ENCODE measurements at regions of chr6 and their contacts with region 1.

Region 1: DNA sequence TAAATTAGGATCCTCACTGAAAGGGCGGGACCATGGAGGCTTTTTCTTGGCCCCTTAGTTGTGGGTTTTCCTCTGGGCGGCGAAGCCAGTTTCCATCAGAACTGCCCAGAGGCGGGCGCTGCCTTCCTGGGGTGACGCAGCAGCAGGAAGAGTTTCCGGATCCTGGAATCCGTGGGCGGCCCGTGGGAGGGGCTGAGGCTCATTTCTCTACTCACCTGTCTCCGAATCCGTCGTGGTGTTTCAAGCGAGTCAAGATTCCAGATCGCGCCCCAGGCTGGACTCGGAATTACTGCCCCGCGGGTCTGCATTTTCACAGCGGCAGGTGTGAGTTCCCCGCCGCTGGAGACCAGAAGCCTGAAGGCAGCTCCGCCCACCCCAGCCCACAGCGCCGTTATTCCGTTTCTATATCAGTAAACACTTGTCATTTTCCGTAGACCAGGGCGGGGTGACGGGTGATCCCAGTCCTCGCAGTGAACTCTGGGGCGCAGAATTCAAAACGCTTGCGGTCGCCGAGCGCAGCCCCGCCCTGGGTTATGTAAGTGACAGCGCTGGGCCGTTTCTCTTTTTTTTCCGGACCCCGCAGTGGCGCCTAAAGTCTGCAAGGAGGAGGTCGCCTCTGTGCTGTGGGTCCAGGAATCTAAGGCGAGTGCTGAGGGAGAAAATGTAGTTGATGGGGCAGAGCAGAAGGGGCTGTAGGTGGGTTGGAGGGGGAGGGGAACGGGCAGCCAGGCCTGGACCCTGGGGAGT is 27.2 kb upstream of the POU5F1 start:
- DNase-seq: peak; percentile 98
- H3K4me3 Mint-ChIP-seq: peak overlapping the region; percentile 83
- H3K27ac Mint-ChIP-seq: peak overlapping the region; percentile 97
- H3K4me1 Mint-ChIP-seq: peaks cover 57% of the 10 kb centered on the region
- H3K27me3 Mint-ChIP-seq: no peaks in the 10 kb centered on the region

Region 2: DNA sequence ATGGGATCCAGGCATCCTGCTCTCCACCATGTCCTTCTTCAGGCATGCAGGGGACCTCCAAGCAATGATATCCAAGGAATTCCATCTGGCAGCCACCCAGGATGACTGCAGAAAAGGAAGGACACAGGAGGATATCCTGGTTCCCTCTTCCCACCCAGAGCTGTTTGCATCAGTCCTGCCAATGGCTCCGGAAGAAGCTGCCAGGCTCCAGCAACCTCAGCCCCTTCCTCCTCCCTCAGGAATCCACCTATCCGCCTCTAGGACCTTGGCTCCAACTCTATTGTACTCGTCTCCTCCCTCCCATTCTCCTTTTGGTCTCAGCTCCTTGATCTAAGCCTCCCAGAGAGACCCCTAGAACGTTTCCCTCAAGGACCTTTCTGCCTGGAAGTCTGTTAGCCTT is 58.1 kb before region 1 on chr6:
- CTCF ChIA-PET with region 1: interaction called, 15 read pairs
- intact Hi-C with region 1: loop called (anchors 1 kb)
- DNase-seq: no peak
- H3K4me3 Mint-ChIP-seq: no peak overlapping the region
- H3K27ac Mint-ChIP-seq: no peak overlapping the region
- H3K4me1 Mint-ChIP-seq: peaks cover 4% of the 10 kb centered on the region
- H3K27me3 Mint-ChIP-seq: no peaks in the 10 kb centered on the region

Region 3: GRCh38 chr6:31158140-31158862 is 39.4 kb before region 1 on chr6 and contains the start of gene TCF19:
- CTCF ChIA-PET with region 1: interaction called, 5 read pairs
- intact Hi-C with region 1: loop called (anchors 1 kb)
- DNase-seq: peak; percentile 100
- H3K4me3 Mint-ChIP-seq: peak within 1 kb of the TSS; percentile 97
- H3K27ac Mint-ChIP-seq: peak within 1 kb of the TSS; percentile 83
- H3K4me1 Mint-ChIP-seq: peaks cover 37% of the 10 kb centered on the region
- H3K27me3 Mint-ChIP-seq: no peaks in the 10 kb centered on the region
- total RNA-seq, gene TCF19: 72.0 to 73.3 TPM

Region 4: DNA sequence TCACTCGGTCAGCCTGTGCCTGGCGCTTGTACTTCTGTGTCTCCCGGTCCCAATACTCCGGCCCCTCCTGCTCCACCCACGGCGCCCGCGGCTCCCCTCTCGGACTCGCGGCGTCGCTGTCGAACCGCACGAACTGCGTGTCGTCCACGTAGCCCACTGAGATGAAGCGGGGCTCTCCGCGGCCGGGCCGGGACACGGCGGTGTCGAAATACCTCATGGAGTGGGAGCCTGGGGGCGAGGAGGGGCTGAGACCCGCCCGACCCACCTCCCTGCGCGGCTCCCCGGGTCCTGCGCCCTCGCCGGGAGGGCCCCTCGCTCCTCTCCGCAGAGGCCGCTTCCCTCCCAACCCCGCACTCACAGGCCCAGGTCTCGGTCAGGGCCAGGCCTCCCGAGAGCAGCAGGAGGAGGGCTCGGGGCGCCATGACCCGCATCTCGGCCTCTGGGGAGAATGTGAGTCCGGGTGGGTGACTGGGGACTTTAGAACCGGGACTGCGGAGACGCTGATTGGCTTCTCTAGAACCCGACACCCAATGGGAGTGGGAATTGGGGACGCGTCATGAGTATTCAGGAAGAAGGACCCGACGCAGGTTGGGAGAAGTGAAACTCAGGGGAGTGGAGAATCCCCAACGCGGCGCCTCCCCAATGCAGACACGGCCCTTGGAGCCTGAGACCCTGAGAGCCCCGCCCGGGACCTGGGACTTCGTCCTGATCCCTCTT is 74.1 kb after region 1 on chr6 and contains the start of gene HLA-C:
- CTCF ChIA-PET with region 1: interaction called, 4 read pairs
- intact Hi-C with region 1: loop called (anchors 1 kb)
- DNase-seq: peak; percentile 96
- H3K4me3 Mint-ChIP-seq: peak within 1 kb of the TSS; percentile 98
- H3K27ac Mint-ChIP-seq: peak within 1 kb of the TSS; percentile 100
- H3K4me1 Mint-ChIP-seq: peaks cover 46% of the 10 kb centered on the region
- H3K27me3 Mint-ChIP-seq: peaks cover 4% of the 10 kb centered on the region
- total RNA-seq, gene HLA-C: 1,018 to 1,049 TPM

Region 5: DNA sequence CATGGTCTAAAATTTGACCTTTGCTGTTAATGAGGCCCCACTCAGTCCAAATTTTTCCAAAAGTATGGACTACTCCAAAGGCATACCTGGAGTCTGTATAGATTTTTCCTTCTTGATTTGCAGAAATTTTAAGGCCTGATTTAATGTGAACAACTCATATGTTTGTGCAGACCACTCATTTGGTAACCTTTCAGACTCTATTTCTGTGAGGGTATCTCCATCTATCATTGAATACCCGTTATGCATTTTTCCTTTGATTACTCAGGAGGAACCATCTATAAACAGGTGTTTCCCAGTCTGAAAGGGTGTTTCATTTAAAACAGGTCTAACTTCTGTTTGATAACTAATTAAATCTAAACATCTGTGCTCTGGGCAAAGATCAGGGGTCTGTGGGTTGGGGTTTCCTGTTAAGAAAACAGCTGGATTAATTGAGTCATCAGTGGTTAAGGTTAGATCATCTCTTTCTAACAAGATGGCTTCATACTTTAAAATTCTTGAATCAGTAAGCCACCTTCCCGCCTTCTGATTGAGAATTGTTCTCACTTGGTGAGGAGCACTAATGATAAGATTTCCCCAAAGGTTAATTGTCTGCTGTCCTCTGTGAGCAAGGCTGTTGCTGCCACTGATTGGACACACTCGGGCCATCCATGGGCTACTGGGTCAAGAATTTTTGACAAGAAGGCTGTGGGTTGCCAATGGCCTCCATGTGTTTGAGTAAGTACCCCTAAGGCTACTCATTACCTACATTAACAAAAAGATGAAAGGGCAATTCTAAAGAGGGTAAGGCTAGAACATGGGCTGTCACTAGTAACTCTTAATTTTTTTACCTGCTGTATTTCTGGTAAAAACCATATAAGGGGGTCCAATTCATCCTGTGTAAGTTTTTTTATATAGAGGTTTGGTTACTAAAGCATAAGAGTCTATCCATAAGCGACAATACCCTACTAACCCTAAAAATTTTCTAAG is 135.2 kb after region 1 on chr6:
- CTCF ChIA-PET with region 1: no interaction called
- intact Hi-C with region 1: loop called (anchors 1 kb)
- DNase-seq: peak; percentile 56
- H3K4me3 Mint-ChIP-seq: no peak overlapping the region
- H3K27ac Mint-ChIP-seq: peak overlapping the region; percentile 52
- H3K4me1 Mint-ChIP-seq: peaks cover 19% of the 10 kb centered on the region
- H3K27me3 Mint-ChIP-seq: no peaks in the 10 kb centered on the region

Region 6: GRCh38 chr6:31356946-31357466 is 159.3 kb after region 1 on chr6 and contains the start of gene HLA-B:
- CTCF ChIA-PET with region 1: interaction called, 4 read pairs
- intact Hi-C with region 1: loop called (anchors 2 kb)
- DNase-seq: peak; percentile 92
- H3K4me3 Mint-ChIP-seq: peak within 1 kb of the TSS; percentile 97
- H3K27ac Mint-ChIP-seq: peak within 1 kb of the TSS; percentile 100
- H3K4me1 Mint-ChIP-seq: peaks cover 54% of the 10 kb centered on the region
- H3K27me3 Mint-ChIP-seq: no peaks in the 10 kb centered on the region
- total RNA-seq, gene HLA-B: 3,225 to 3,295 TPM

Region 7: DNA sequence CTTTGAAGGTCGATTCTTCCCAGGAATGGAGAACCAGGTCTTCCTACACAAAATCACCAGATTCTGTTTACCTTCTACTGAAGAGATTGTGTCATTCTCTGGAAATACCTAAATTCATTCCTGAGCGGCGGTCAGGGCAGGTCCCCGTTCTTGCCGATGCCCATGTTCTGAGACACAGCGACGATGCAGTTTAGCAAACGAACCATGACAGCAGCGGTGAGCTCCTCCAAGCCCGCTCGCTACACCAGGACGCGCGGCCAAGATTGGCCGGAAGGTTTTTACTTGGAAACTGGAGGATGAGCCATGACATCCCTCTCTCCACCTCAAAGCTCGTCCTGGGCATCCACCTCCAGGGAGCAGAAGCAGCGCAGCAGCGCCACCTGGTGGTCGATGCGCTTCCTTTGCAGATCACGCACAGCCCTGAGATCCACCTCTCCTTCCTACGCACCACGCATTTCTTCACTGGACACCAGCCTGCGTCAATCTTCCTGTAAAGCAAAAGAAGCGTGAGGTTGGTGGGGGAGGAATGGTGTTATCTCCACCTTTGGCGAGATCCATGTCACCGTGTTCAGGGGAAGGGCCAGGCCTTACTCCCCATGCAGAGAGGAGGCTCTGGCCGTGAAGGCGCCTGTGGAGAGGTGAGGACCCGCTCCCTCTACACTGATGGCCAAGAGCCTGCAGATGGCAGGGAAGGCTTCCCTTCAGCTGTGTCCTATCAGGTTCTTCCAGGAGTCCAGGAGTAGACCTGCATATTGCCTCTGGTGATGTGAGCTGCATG is 169.2 kb after region 1 on chr6:
- CTCF ChIA-PET with region 1: interaction called, 117 read pairs
- intact Hi-C with region 1: loop called (anchors 1 kb)
- DNase-seq: peak; percentile 91
- H3K4me3 Mint-ChIP-seq: peak overlapping the region; percentile 76
- H3K27ac Mint-ChIP-seq: peak overlapping the region; percentile 15
- H3K4me1 Mint-ChIP-seq: peaks cover 30% of the 10 kb centered on the region
- H3K27me3 Mint-ChIP-seq: no peaks in the 10 kb centered on the region